BJ (cell line): ENCODE measurements at regions of chr11 and their contacts with region 1.

Region 1: DNA sequence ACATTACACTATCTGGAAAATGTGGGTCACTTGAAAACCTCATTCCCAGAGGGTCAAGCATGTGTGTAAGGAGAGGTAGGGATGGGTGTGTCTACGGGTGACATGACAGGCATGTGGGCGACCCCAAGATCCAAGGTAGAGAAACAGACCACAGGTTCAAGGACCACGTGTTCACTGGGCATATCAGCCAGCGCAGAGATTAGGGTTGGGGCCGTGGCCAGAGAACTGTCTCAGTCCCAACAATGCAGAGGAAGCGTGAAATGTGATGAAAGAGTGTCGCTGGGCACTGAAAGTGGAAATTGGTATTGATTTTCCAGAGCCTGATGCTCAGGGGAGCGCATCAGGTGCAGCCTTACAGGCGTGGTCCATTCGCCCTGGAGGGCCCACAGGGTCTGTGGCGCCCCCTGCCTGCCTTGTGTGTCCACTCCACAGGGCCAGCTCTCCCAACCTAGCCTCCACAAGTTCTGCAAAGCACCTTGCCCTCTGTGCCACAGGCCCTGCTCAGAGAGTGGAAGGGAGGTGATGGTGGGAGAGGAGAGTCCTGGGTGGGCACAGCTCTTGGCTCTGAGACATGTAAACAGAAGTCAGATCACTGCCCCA is 54.8 kb upstream of the LMO1 start:
- DNase-seq: no peak
- H3K4me3 ChIP-seq: no peak overlapping the region
- H3K27me3 ChIP-seq: peaks cover 1% of the 10 kb centered on the region; the same call in 1 of the 2 replicates
- CTCF ChIP-seq: no peak

Region 2: GRCh38 chr11:8289492-8289918 is 28.9 kb before region 1 on chr11:
- CTCF ChIA-PET with region 1: no interaction called
- POLR2A ChIA-PET with region 1: no interaction called
- DNase-seq: no peak
- H3K4me3 ChIP-seq: no peak overlapping the region
- H3K27me3 ChIP-seq: peaks cover 4% of the 10 kb centered on the region
- CTCF ChIP-seq: no peak

Region 3: GRCh38 chr11:8328848-8329330 is 10.5 kb after region 1 on chr11:
- CTCF ChIA-PET with region 1: interaction called, 15 read pairs
- POLR2A ChIA-PET with region 1: no interaction called
- DNase-seq: peak; percentile 16
- H3K4me3 ChIP-seq: no peak overlapping the region
- H3K27me3 ChIP-seq: peaks cover 3% of the 10 kb centered on the region; the same call in 1 of the 2 replicates
- CTCF ChIP-seq: peak; percentile 86